ENCODE measurements at regions of chr1 and their contacts with region 1.

Region 1: DNA sequence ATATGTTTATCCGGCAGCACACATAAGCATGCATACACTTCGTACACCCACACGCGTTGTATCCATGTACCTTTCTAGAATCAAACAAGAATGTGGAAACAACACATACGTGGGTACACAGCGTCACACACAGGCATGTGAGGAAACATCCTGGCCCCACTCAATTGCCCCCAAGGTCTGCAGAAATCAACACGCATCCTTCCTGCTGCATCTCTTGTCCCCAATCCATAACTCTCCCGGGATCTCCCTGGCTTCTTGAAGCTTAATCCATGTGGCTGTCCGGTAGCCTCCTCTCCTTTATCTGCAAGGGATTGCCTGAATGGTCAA is 5.5 kb upstream of the TBX15 start:
- DNase-seq: no peak
- ATAC-seq: no peak
- H3K4me3 Mint-ChIP-seq: no peak overlapping the region
- H3K27ac Mint-ChIP-seq: peak overlapping the region; percentile 15
- H3K4me1 Mint-ChIP-seq: no peaks in the 10 kb centered on the region
- H3K27me3 Mint-ChIP-seq: peaks cover 80% of the 10 kb centered on the region
- CTCF ChIP-seq: no peak

Region 2: DNA sequence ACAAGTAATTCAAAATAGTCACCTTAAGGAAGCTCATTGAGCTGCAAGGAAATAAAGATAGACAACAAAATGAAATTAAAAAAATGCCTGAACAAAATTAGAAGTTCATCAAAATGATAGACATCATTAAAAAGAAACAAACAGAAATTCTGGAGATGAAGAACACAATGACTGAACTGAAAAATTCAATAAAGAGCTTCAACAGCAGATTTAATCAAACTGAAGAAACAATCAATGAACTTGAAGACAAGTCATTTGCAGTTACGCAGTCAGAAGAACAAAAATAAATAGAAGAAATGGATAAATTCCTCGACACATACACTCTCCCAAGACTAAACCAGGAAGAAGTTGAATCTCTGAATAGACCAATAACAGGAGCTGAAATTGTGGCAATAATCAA is 418.6 kb before region 1 on chr1:
- CTCF ChIA-PET with region 1: no interaction called
- POLR2A ChIA-PET with region 1: no interaction called
- intact Hi-C with region 1: no loop called
- DNase-seq: no peak
- ATAC-seq: no peak
- H3K4me3 Mint-ChIP-seq: no peak overlapping the region
- H3K27ac Mint-ChIP-seq: no peak overlapping the region
- H3K4me1 Mint-ChIP-seq: no peaks in the 10 kb centered on the region
- H3K27me3 Mint-ChIP-seq: no peaks in the 10 kb centered on the region
- CTCF ChIP-seq: no peak

Region 3: GRCh38 chr1:118979754-118980575 is 13.7 kb before region 1 on chr1:
- CTCF ChIA-PET with region 1: no interaction called
- POLR2A ChIA-PET with region 1: no interaction called
- intact Hi-C with region 1: loop called (anchors 2 kb)
- DNase-seq: no peak
- ATAC-seq: no peak
- H3K4me3 Mint-ChIP-seq: peak overlapping the region; percentile 35
- H3K27ac Mint-ChIP-seq: no peak overlapping the region
- H3K4me1 Mint-ChIP-seq: peaks cover 18% of the 10 kb centered on the region
- H3K27me3 Mint-ChIP-seq: peaks cover 71% of the 10 kb centered on the region
- CTCF ChIP-seq: no peak

Measured in activated B cell treated with CpG ODN at 0.5 μM for 24 hours (primary cell).